ENCODE measurements at regions of chr20 and their contacts with region 1.

Region 1: GRCh38 chr20:41617931-41618806 is at the start of gene CHD6:
- DNase-seq: peak; percentile 98 to 100 (median 99)
- H3K4me3 ChIP-seq: peak within 1 kb of the TSS; percentile 53
- H3K4me3 Mint-ChIP-seq: peak within 1 kb of the TSS; percentile 91 to 96 (median 96)
- H3K27ac ChIP-seq: peak within 1 kb of the TSS; percentile 36
- H3K27ac Mint-ChIP-seq: peak within 1 kb of the TSS; percentile 62 to 97 (median 90)
- H3K4me1 ChIP-seq: peaks cover 28% of the 10 kb centered on the region
- H3K4me1 Mint-ChIP-seq: peaks cover 47 to 53% (median 52%) of the 10 kb centered on the region in 3 donors
- H3K27me3 ChIP-seq: no peaks in the 10 kb centered on the region
- H3K27me3 Mint-ChIP-seq: peaks cover 0 to 1% of the 10 kb centered on the region in 2 donors
- total RNA-seq, gene CHD6: 24.6 to 25.3 TPM

Region 2: DNA sequence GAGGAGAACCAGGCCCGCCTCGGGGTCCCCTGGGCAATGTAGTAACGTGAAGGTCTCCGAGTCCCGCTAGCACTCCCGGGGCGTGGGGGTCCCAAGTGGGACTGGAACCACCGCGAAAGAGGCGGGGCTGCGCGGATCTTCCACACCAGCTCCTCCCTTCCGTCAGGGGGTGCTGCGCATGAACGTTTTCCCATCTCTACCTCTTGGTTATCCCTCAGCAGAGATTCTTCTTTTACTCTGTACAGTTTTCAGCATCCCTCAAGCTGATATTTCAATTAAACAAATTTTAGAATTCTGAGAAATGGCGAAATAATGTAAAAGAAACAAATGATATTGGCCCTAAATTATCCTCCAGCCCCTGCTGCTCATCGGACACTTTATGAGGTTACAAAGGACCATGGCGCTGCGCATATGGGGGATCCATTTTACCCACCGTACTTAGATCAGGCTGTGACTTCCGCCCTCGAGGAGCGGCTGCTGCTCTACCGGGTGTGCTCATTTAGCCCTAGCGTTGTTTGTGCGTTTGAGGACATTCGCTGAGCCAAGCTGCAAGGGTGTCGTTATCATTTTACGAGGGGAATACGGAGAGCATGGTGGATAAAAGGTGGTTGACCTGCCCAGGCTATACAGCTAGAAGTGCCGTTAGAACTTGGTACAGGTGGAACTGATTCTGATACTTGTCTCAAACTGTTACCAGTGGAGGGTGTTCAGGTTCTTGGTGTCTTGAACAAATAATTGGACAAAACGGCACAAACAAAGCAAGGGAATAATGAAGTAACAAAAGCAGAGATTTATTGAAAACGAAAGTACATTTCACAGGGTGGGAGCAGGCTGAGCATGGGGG is 75.2 kb after region 1 on chr20:
- CTCF ChIA-PET with region 1: interaction called, 9 read pairs
- POLR2A ChIA-PET with region 1: interaction called, 40 read pairs
- DNase-seq: peak; percentile 61 to 88 (median 79)
- H3K4me3 ChIP-seq: peak overlapping the region; percentile 75
- H3K4me3 Mint-ChIP-seq: peak overlapping the region; percentile 87 to 98 (median 88)
- H3K27ac ChIP-seq: peak overlapping the region; percentile 88
- H3K27ac Mint-ChIP-seq: peak overlapping the region; percentile 77 to 98 (median 93)
- H3K4me1 ChIP-seq: peaks cover 4% of the 10 kb centered on the region
- H3K4me1 Mint-ChIP-seq: peaks cover 16 to 20% (median 17%) of the 10 kb centered on the region in 3 donors
- H3K27me3 ChIP-seq: no peaks in the 10 kb centered on the region
- H3K27me3 Mint-ChIP-seq: peaks cover 2 to 13% of the 10 kb centered on the region in 2 donors

Region 3: GRCh38 chr20:41723462-41723861 is 105.3 kb after region 1 on chr20:
- CTCF ChIA-PET with region 1: no interaction called
- POLR2A ChIA-PET with region 1: no interaction called
- DNase-seq: no peak
- H3K4me3 ChIP-seq: no peak overlapping the region
- H3K4me3 Mint-ChIP-seq: no peak overlapping the region
- H3K27ac ChIP-seq: no peak overlapping the region
- H3K27ac Mint-ChIP-seq: no peak overlapping the region
- H3K4me1 ChIP-seq: no peaks in the 10 kb centered on the region
- H3K4me1 Mint-ChIP-seq: no peaks in the 10 kb centered on the region
- H3K27me3 ChIP-seq: no peaks in the 10 kb centered on the region
- H3K27me3 Mint-ChIP-seq: peaks cover 8 to 16% of the 10 kb centered on the region in 2 donors

Measured in CD8-positive, alpha-beta memory T cell (primary cell).